Activated CD4-positive, alpha-beta memory T cell treated with anti-CD3 and anti-CD28 coated beads for 36 hours (primary cell): ENCODE measurements at regions of chr12 and their contacts with region 1.

Region 1: GRCh38 chr12:6965026-6965661 is 5.3 kb downstream of the PHB2 start:
- DNase-seq: peak; percentile 93
- H3K4me3 Mint-ChIP-seq: no peak overlapping the region
- H3K27ac Mint-ChIP-seq: peak overlapping the region; percentile 89
- H3K4me1 Mint-ChIP-seq: peaks cover 72% of the 10 kb centered on the region
- H3K27me3 Mint-ChIP-seq: no peaks in the 10 kb centered on the region

Region 2: DNA sequence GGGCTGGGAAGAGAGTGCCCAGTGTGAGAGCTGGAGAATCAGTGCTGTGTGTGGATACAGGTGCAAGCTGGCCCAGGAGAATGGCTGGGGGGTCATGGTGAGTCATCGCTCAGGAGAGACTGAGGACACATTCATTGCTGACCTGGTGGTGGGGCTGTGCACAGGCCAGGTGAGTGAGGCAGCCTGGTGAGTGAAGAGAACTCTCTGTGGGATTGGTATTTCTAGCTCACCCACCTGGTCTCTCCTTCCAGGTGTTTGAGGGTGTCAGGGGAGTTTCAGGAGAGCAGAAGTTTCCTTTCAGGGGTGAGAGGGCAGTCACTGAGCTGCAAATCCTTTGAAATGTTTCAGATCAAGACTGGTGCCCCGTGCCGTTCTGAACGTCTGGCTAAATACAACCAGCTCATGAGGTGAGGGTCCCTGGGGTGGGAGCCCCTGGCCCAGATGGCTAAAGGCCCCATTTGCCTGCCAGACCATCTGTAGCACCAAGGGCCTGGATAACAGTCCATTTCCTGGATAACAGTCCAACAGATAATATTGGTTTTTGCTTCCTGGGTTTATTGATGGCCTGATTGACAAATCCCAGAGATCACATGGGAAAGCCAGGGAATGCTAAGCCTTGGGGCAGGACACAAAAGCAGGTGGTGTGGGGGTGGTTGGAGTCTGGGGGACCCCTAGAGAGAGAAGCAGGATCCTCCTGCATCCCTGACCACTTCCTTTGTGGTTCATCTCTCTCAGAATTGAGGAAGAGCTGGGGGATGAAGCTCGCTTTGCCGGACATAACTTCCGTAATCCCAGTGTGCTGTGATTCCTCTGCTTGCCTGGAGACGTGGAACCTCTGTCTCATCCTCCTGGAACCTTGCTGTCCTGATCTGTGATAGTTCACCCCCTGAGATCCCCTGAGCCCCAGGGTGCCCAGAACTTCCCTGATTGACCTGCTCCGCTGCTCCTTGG is 42.9 kb before region 1 on chr12:
- CTCF ChIA-PET with region 1: interaction called, 29 read pairs
- POLR2A ChIA-PET with region 1: interaction called, 6 read pairs
- intact Hi-C with region 1: loop called (anchors 1 kb)
- DNase-seq: no peak
- H3K4me3 Mint-ChIP-seq: no peak overlapping the region
- H3K27ac Mint-ChIP-seq: no peak overlapping the region
- H3K4me1 Mint-ChIP-seq: peaks cover 37% of the 10 kb centered on the region
- H3K27me3 Mint-ChIP-seq: no peaks in the 10 kb centered on the region

Region 3: DNA sequence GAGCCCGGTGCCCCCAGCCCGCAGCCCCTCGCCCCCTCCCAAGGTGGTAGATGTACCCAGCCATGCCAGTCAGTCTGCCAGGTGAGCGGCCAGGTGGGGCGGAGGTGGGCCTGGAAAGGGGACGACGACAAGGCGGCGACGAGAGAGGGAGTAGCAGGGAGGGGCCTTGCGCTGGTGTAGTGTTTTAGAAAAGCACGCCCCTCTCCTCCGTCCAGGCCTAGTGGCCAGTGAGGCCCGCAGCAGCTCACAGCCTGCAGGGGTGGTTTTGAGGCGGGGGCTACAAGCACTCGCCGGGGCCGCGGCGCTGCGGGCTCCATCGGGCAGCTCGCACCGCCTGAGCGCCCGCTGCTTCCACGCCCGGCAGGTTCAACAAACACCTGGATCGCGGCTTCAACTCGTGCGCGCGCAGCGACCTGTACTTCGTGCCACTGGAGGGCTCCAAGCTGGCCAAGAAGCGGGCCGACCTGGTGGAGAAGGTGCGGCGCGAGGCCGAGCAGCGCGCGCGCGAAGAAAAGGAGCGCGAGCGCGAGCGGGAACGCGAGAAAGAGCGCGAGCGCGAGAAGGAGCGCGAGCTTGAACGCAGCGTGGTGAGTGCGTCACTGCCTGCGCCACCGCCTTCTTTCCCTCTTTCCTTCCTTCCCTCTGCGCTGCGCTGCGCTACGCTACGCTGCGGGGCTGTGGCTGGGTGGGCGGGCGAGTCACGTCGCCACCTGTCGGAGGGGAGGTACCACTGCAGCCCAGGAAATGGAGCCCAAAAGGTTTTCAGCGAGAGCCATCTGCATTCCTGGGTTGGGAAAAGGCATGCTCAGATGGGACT is 27.5 kb before region 1 on chr12:
- CTCF ChIA-PET with region 1: interaction called, 586 read pairs
- POLR2A ChIA-PET with region 1: interaction called, 507 read pairs
- intact Hi-C with region 1: no loop called
- DNase-seq: peak; percentile 96
- H3K4me3 Mint-ChIP-seq: peak overlapping the region; percentile 76
- H3K27ac Mint-ChIP-seq: peak overlapping the region; percentile 94
- H3K4me1 Mint-ChIP-seq: peaks cover 44% of the 10 kb centered on the region
- H3K27me3 Mint-ChIP-seq: no peaks in the 10 kb centered on the region

Region 4: GRCh38 chr12:7018350-7019042 is 53.4 kb after region 1 on chr12 and contains the start of gene LPCAT3:
- CTCF ChIA-PET with region 1: interaction called, 6 read pairs
- POLR2A ChIA-PET with region 1: interaction called, 4 read pairs
- intact Hi-C with region 1: loop called (anchors 1 kb)
- DNase-seq: peak; percentile 98
- H3K4me3 Mint-ChIP-seq: peak within 1 kb of the TSS; percentile 88
- H3K27ac Mint-ChIP-seq: peak within 1 kb of the TSS; percentile 73
- H3K4me1 Mint-ChIP-seq: peaks cover 26% of the 10 kb centered on the region
- H3K27me3 Mint-ChIP-seq: no peaks in the 10 kb centered on the region
- total RNA-seq, gene LPCAT3: 18.3 to 20.5 TPM

Region 5: DNA sequence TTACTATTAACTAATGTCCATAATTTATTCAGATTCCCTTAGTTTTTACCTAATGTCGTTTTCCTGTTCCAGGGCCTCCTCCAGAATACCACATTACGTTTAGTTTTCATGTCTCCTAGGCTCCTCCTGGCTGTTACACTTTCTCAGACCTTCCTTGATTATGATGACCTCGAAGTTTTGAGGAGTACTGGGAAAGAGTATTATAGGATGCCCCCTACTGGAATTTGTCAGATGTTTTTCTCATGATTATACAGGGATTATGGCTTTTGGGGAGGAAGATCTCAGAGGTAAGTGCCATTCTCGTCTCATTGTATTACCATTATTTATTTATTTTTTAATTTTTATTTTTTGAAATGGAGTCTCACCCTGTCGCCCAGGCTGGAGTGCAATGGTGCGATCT is 77.7 kb after region 1 on chr12:
- CTCF ChIA-PET with region 1: no interaction called
- POLR2A ChIA-PET with region 1: no interaction called
- intact Hi-C with region 1: no loop called
- DNase-seq: no peak
- H3K4me3 Mint-ChIP-seq: no peak overlapping the region
- H3K27ac Mint-ChIP-seq: no peak overlapping the region
- H3K4me1 Mint-ChIP-seq: peaks cover 7% of the 10 kb centered on the region
- H3K27me3 Mint-ChIP-seq: no peaks in the 10 kb centered on the region

Region 6: GRCh38 chr12:7108796-7109571 is 143.8 kb after region 1 on chr12 and contains the start of gene C1RL:
- CTCF ChIA-PET with region 1: interaction called, 8 read pairs
- POLR2A ChIA-PET with region 1: interaction called, 8 read pairs
- intact Hi-C with region 1: loop called (anchors 5 kb)
- DNase-seq: peak; percentile 89
- H3K4me3 Mint-ChIP-seq: peak within 1 kb of the TSS; percentile 95
- H3K27ac Mint-ChIP-seq: peak within 1 kb of the TSS; percentile 99
- H3K4me1 Mint-ChIP-seq: peaks cover 39% of the 10 kb centered on the region
- H3K27me3 Mint-ChIP-seq: no peaks in the 10 kb centered on the region
- total RNA-seq, gene C1RL: 17.1 to 22.6 TPM